Activated CD4-positive, alpha-beta memory T cell treated with anti-CD3 and anti-CD28 coated beads, Interleukin-2, amount 10 ng/mL, durations not matched to agents 7 days and 5 days (primary cell): ENCODE measurements at regions of chr15 and their contacts with region 1.

Region 1: DNA sequence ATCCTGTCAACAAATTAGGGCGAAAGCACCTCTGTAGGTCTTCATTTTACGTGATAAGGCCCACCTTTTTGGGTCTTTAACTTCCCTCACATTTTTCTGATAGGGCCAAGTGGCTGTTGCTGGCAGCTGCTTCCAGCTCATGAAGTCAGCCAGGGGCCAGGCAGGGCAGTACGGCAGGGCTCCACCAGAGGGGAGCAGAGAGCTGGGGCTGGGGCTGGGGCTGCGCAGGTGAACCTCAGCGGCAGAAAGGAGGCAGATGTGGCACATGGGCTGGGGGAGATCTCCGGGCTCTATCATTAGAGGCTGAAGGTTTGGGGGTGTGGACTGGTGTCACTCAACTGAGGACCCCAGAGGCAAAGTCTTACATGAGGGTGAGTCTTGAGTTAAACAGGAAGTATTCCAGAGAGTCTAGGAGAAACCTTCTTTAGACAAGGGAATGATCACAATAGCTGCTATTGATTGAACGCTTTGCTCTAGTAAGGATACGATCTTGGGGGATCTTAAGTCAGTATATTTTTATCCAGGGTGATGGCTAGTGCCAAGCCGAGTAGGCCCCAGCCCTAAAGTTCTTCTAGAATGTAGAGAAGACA is 62.8 kb upstream of the MEX3B start:
- DNase-seq: peak; percentile 77
- H3K4me3 Mint-ChIP-seq: no peak overlapping the region
- H3K27ac Mint-ChIP-seq: no peak overlapping the region
- H3K4me1 Mint-ChIP-seq: no peaks in the 10 kb centered on the region
- H3K27me3 Mint-ChIP-seq: no peaks in the 10 kb centered on the region

Region 2: GRCh38 chr15:82129761-82130160 is 21.2 kb after region 1 on chr15:
- CTCF ChIA-PET with region 1: interaction called, 10 read pairs
- POLR2A ChIA-PET with region 1: no interaction called
- DNase-seq: no peak
- H3K4me3 Mint-ChIP-seq: no peak overlapping the region
- H3K27ac Mint-ChIP-seq: no peak overlapping the region
- H3K4me1 Mint-ChIP-seq: peaks cover 9% of the 10 kb centered on the region
- H3K27me3 Mint-ChIP-seq: no peaks in the 10 kb centered on the region

Region 3: DNA sequence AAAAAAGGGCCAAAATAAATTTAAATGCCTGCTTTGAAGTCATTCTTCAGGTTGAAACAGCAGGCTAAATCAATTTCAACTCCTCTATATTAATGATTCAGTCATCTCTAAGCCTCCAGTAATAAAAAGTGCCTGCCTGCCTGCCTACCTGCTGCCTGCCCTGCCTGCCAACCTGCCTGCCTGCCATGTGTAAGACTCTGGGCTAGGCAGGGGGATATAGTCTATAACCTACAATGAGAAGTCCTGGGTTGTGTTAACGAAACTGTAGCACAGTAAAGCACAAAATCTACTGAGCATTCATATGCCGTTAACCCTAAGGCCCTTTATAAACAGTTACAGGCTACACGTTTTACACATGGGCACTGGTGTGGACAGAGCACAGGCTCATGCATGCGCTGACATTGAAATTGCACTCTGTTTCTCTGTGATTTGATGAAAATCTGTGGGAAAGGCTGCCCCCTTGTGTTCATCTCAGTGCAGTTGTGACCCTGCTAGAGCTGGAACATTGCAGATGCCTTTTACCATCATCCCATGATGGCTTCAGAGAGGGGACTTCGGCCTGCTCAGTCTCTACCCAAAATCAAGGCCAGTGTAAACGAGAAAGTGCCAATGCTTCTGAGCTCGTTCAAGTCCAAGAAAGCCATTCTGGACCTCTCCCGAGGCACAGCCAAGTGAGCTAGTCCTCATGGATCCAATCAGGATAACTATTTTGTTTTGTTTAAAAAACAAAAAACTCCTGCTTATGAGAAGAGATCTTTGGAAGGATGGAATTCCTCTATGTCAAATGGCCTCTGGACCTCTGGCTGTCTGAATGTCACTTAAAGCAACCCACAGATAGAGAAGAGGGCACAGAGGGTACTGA is 89.4 kb after region 1 on chr15:
- CTCF ChIA-PET with region 1: interaction called, 25 read pairs
- POLR2A ChIA-PET with region 1: no interaction called
- DNase-seq: peak; percentile 61
- H3K4me3 Mint-ChIP-seq: no peak overlapping the region
- H3K27ac Mint-ChIP-seq: no peak overlapping the region
- H3K4me1 Mint-ChIP-seq: no peaks in the 10 kb centered on the region
- H3K27me3 Mint-ChIP-seq: no peaks in the 10 kb centered on the region